ENCODE measurements at regions of chr22 and their contacts with region 1.

Region 1: GRCh38 chr22:42090596-42091454 is at the start of gene NDUFA6:
- DNase-seq: peak; percentile 98
- H3K4me3 Mint-ChIP-seq: peak within 1 kb of the TSS; percentile 96
- H3K27ac Mint-ChIP-seq: peak within 1 kb of the TSS; percentile 96
- H3K4me1 Mint-ChIP-seq: peaks cover 15% of the 10 kb centered on the region
- H3K27me3 Mint-ChIP-seq: no peaks in the 10 kb centered on the region
- CTCF ChIP-seq: peak; percentile 74
- total RNA-seq, gene NDUFA6: 61.6 and 68.0 TPM in 2 replicates

Region 2: GRCh38 chr22:41915035-41915785 is 175.6 kb before region 1 on chr22 and contains the start of gene SHISA8:
- CTCF ChIA-PET with region 1: no interaction called
- intact Hi-C with region 1: no loop called
- DNase-seq: peak; percentile 56
- H3K4me3 Mint-ChIP-seq: no peak within 1 kb of the TSS
- H3K27ac Mint-ChIP-seq: no peak within 1 kb of the TSS
- H3K4me1 Mint-ChIP-seq: peaks cover 7% of the 10 kb centered on the region
- H3K27me3 Mint-ChIP-seq: peaks cover 61% of the 10 kb centered on the region
- CTCF ChIP-seq: no peak
- total RNA-seq, gene SHISA8: not detected in 2 replicates

Region 3: DNA sequence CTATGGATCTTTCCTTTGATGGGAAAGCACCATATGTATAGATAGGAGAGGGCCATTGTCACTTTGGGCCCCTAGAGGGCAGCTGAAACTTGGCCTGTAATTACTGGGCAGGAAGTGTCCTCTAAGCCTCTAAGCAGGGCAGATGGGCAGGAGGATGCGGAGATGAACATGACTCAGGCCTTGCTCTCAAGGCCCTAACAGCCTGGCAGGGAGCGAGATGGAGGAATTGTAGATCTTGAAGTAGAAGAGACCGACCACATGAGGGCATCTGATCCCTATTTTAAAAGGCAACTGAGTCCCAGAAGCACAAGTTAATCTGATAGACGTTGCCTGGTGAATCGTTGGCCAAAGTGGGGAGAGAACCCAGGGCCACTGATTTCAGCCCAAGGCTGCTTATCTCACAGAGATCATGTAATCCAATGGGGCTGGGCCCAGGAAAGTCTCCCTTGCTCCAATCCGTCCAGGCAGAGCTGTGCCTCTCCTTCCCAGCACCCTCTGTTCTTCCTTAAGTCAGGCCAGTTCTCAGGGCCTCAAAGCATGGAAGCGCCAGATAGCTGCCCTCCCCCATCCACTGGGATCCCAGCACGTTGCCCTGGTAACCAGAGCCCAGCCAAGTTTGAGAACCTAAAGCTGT is 124.1 kb before region 1 on chr22:
- CTCF ChIA-PET with region 1: no interaction called
- intact Hi-C with region 1: no loop called
- DNase-seq: peak; percentile 45
- H3K4me3 Mint-ChIP-seq: no peak overlapping the region
- H3K27ac Mint-ChIP-seq: no peak overlapping the region
- H3K4me1 Mint-ChIP-seq: peaks cover 7% of the 10 kb centered on the region
- H3K27me3 Mint-ChIP-seq: peaks cover 26% of the 10 kb centered on the region
- CTCF ChIP-seq: no peak

Region 4: GRCh38 chr22:42079319-42080251 is 11.2 kb before region 1 on chr22 and contains the start of gene SMDT1:
- CTCF ChIA-PET with region 1: interaction called, 17 read pairs
- intact Hi-C with region 1: no loop called
- DNase-seq: peak; percentile 97
- H3K4me3 Mint-ChIP-seq: peak within 1 kb of the TSS; percentile 91
- H3K27ac Mint-ChIP-seq: peak within 1 kb of the TSS; percentile 96
- H3K4me1 Mint-ChIP-seq: no peaks in the 10 kb centered on the region
- H3K27me3 Mint-ChIP-seq: no peaks in the 10 kb centered on the region
- CTCF ChIP-seq: no peak
- total RNA-seq, gene SMDT1: 60.8 and 65.5 TPM in 2 replicates

Region 5: GRCh38 chr22:42111798-42112197 is 21.0 kb after region 1 on chr22:
- CTCF ChIA-PET with region 1: interaction called, 10 read pairs
- intact Hi-C with region 1: no loop called
- DNase-seq: no peak
- H3K4me3 Mint-ChIP-seq: no peak overlapping the region
- H3K27ac Mint-ChIP-seq: no peak overlapping the region
- H3K4me1 Mint-ChIP-seq: no peaks in the 10 kb centered on the region
- H3K27me3 Mint-ChIP-seq: no peaks in the 10 kb centered on the region
- CTCF ChIP-seq: no peak

Region 6: DNA sequence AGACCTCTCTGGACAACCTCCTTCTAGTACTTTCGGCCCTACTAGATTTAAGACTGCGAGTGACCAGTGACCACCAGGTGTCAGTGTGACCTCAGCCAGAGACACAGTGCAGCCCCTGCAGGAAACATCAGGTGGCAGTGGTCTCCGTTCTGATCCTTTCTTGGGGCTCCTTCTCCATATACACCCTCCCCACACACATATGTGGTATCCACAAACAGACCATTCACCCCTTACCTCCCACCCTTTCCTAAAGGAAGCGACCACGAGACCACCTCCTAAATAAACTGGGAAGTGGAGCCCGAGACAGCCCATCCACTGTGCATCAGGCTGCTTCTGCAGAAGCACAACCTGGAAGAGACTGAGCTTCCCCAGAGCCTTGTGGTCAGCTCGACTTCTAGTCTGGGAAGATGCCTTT is 78.2 kb after region 1 on chr22:
- CTCF ChIA-PET with region 1: no interaction called
- intact Hi-C with region 1: no loop called
- DNase-seq: peak; percentile 85
- H3K4me3 Mint-ChIP-seq: no peak overlapping the region
- H3K27ac Mint-ChIP-seq: no peak overlapping the region
- H3K4me1 Mint-ChIP-seq: peaks cover 20% of the 10 kb centered on the region
- H3K27me3 Mint-ChIP-seq: no peaks in the 10 kb centered on the region
- CTCF ChIP-seq: peak; percentile 97

Region 7: GRCh38 chr22:42396621-42397331 is 306.0 kb after region 1 on chr22:
- CTCF ChIA-PET with region 1: no interaction called
- intact Hi-C with region 1: no loop called
- DNase-seq: no peak
- H3K4me3 Mint-ChIP-seq: no peak overlapping the region
- H3K27ac Mint-ChIP-seq: no peak overlapping the region
- H3K4me1 Mint-ChIP-seq: no peaks in the 10 kb centered on the region
- H3K27me3 Mint-ChIP-seq: peaks cover 33% of the 10 kb centered on the region
- CTCF ChIP-seq: no peak

Region 8: DNA sequence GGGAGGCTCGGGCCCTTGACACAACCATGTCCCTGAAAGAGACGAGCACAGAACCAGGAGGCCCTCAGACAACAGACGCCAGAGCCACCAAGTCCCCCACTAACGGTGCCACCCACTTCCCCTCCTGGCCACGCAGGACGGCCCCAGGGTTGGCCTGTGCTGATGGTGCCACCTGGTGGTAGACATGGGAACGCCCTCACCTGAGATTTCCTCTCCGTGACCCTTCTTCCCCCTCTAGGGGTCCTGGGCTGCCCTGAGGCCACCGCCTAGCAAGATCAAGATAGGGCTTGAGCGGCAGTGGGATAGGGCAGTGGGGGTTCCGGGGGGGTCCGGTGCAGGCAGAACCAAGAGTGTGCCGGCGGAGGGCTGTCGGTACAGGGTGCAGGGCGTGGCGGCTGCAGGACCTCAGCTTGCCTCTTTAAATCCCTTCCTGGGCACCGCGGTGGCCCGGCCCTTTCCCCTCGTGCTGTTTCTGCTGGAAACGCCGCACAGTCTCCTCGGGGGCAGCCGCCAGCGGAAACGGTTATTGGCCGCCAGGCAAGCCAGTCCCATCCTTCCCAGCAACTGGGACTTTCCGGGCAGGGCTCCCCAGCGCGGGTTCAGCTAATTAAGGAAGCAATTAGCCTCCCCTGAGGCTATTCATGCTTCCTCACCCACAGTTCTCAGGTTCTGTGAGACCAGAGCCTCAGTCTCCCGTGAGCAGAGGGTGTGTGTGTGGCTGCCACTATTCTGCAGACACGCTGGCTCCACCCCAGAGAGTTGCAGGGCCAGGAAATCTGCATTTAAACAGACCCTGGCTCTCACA is 346.9 kb after region 1 on chr22:
- CTCF ChIA-PET with region 1: interaction called, 4 read pairs
- intact Hi-C with region 1: loop called (anchors 2 kb)
- DNase-seq: peak; percentile 85
- H3K4me3 Mint-ChIP-seq: peak overlapping the region; percentile 72
- H3K27ac Mint-ChIP-seq: no peak overlapping the region
- H3K4me1 Mint-ChIP-seq: peaks cover 23% of the 10 kb centered on the region
- H3K27me3 Mint-ChIP-seq: peaks cover 19% of the 10 kb centered on the region
- CTCF ChIP-seq: peak; percentile 99

Region 9: GRCh38 chr22:42444077-42444904 is 353.5 kb after region 1 on chr22:
- CTCF ChIA-PET with region 1: interaction called, 15 read pairs
- intact Hi-C with region 1: no loop called
- DNase-seq: peak; percentile 82
- H3K4me3 Mint-ChIP-seq: peak overlapping the region; percentile 61
- H3K27ac Mint-ChIP-seq: peak overlapping the region; percentile 27
- H3K4me1 Mint-ChIP-seq: peaks cover 27% of the 10 kb centered on the region
- H3K27me3 Mint-ChIP-seq: peaks cover 5% of the 10 kb centered on the region
- CTCF ChIP-seq: peak; percentile 77